Activated naive CD4-positive, alpha-beta T cell treated with anti-CD3 and anti-CD28 coated beads for 36 hours (primary cell): ENCODE measurements at regions of chr13 and their contacts with region 1.

Region 1: GRCh38 chr13:36346222-36347083 is at the start of gene SPART:
- DNase-seq: peak; percentile 93
- H3K4me3 Mint-ChIP-seq: peak within 1 kb of the TSS; percentile 86
- H3K27ac Mint-ChIP-seq: peak within 1 kb of the TSS; percentile 90
- H3K4me1 Mint-ChIP-seq: peaks cover 26% of the 10 kb centered on the region
- H3K27me3 Mint-ChIP-seq: no peaks in the 10 kb centered on the region
- total RNA-seq, gene SPART: 12.5 to 17.0 TPM

Region 2: DNA sequence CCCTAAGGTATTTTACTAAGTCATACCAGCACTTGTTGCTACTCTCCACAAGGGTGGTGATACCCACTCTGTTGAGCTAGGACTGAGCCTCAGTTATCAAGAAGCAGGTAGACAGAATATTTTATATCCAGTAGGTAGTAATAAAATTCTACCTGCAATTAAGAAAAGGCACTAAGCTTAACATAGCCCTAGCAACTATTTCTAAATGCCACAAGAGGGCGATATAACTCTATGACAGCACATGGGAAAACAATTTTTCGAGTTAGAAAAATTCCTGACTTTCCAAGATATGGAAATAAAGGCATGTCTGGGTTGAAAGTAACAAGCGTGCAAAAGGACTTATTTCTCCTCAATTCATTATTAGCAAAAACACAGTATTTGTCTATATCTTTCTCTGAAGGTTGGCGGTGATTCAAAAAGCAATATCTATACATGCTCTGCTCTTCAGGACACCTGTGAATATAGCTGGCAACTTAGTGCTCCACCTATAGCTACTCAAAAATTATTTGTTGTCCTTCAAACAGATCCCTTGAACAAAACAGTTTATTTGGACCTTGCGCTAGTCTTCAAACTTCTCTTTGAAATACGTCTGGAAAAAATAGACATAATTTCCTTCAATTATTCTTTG is 63.5 kb before region 1 on chr13:
- CTCF ChIA-PET with region 1: interaction called, 15 read pairs
- intact Hi-C with region 1: loop called (anchors 2 kb)
- DNase-seq: no peak
- H3K4me3 Mint-ChIP-seq: no peak overlapping the region
- H3K27ac Mint-ChIP-seq: no peak overlapping the region
- H3K4me1 Mint-ChIP-seq: no peaks in the 10 kb centered on the region
- H3K27me3 Mint-ChIP-seq: peaks cover 17% of the 10 kb centered on the region

Region 3: GRCh38 chr13:36357692-36358091 is 11.2 kb after region 1 on chr13:
- CTCF ChIA-PET with region 1: interaction called, 10 read pairs
- intact Hi-C with region 1: no loop called
- DNase-seq: no peak
- H3K4me3 Mint-ChIP-seq: no peak overlapping the region
- H3K27ac Mint-ChIP-seq: no peak overlapping the region
- H3K4me1 Mint-ChIP-seq: no peaks in the 10 kb centered on the region
- H3K27me3 Mint-ChIP-seq: peaks cover 8% of the 10 kb centered on the region

Region 4: DNA sequence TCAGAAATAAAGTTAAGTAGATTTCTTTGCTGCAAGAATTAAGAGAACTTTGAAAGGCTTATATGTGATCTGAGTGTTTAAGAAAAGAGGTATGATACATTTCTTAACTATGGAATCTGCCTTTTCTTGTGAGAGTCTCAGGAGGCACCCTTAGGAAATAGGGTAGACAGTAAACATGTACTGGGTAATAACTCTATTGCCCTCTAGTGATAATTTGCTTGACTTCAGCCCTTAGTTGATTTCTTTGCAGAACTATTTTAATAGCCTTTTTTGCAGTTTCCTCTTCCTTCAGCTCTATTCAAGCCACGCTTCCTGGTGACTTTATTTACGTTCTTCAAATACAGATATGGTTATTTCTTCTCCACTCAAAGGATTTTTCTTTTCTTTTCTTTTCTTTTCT is 48.8 kb after region 1 on chr13:
- CTCF ChIA-PET with region 1: interaction called, 16 read pairs
- intact Hi-C with region 1: loop called (anchors 1 kb)
- DNase-seq: no peak
- H3K4me3 Mint-ChIP-seq: no peak overlapping the region
- H3K27ac Mint-ChIP-seq: no peak overlapping the region
- H3K4me1 Mint-ChIP-seq: no peaks in the 10 kb centered on the region
- H3K27me3 Mint-ChIP-seq: peaks cover 14% of the 10 kb centered on the region

Region 5: DNA sequence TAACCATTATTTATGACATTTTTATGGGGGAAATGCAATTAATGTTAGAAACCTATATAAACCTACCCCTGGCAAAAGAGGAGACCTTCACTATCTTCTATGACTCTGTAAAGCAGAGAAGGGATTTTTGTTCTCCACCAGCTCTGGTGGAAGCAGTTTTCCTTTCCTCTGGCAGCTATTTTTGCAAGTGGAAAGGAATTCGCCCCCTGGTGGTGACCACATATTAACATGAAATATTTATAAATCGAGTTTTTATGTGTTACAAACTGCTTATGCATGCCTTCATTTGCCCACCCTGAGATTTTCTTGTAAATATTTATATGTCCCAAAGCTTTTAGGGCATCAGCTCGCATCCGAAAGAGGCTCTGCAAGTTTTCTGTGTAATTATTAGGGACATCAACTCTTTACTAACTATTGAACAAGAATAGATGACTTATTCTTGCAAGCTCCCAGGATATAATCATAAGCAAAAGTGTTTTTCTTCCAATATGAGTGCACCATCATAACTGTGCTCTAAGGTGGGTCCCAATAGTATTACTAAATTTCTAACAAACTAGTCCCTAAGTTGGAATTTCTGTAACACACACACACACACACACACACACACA is 389.8 kb after region 1 on chr13:
- CTCF ChIA-PET with region 1: interaction called, 17 read pairs
- intact Hi-C with region 1: loop called (anchors 1 kb)
- DNase-seq: peak; percentile 50
- H3K4me3 Mint-ChIP-seq: no peak overlapping the region
- H3K27ac Mint-ChIP-seq: no peak overlapping the region
- H3K4me1 Mint-ChIP-seq: no peaks in the 10 kb centered on the region
- H3K27me3 Mint-ChIP-seq: peaks cover 4% of the 10 kb centered on the region

Region 6: DNA sequence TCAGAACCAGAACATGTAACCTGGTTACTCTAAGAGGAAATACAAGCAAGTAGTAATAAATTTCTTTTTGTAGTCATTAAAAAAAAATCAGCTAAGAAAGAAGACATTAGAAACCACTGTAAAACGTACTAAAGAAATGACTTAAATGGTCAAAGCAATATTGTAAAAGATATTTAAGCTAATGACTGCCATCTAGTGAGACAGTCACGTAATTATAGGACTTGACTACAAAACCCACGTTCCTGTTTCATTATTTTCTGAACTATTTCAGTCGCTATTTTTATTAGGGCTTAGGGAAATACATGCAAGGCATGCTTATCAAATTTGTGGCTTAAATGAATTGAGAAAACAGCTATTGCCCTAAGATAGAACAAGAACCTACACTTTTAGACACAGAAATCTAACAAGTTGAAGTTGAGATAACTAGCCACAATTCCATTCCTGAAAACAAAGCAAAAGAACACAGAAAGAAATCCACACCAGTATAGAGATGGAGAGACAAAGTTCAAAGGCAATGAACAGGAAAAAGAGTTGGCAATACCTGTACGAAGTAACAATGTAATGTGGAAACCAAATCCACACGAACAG is 634.8 kb after region 1 on chr13:
- CTCF ChIA-PET with region 1: no interaction called
- intact Hi-C with region 1: loop called (anchors 5 kb)
- DNase-seq: no peak
- H3K4me3 Mint-ChIP-seq: no peak overlapping the region
- H3K27ac Mint-ChIP-seq: no peak overlapping the region
- H3K4me1 Mint-ChIP-seq: peaks cover 2% of the 10 kb centered on the region
- H3K27me3 Mint-ChIP-seq: no peaks in the 10 kb centered on the region

Region 7: DNA sequence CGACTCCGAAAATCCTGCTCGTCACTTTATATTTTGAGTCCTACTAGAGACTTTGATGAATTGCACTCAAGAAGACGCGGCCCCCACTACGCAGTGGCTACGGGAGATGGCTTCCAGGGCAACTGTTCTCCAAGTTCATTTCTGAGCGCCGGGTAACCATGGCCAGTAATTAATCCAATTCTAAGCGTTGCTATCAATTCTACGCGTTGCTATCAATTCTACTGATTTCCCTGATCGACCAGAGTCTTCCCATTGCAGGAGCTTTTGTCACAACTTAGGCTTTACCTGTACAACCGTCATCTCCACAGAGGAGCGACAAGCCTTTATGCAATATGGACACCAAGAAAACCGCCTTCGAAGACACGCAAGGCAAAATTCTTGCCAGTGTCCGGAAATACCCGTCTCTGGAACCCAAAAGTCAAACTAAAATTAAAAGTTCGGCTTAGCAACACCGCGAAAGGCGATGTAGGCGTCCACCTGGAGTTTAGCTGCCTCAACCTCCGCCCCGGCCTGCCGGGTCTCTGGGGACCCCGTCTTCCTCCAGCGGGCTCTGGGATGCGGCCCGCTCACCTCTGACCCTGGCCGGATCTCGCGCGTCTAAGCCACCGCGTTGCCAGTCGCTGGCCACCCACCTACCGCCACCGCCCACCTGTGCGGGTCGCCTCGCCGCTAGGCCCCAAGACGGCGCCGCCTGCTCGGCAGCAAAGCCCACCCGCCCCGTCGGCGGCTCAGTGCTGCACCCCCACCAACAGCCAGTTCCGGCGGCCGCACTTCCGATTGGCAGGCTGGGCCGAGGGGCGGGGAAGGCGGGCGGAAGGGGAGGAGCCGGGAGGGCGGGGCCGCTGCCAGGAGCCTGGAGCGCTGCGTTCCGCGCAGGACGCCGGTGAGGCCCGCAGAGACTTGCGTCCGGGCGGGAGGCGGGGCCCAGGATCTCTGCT is 712.7 kb after region 1 on chr13 and contains the start of gene SUPT20H:
- CTCF ChIA-PET with region 1: no interaction called
- intact Hi-C with region 1: loop called (anchors 1 kb)
- DNase-seq: peak; percentile 94
- H3K4me3 Mint-ChIP-seq: peak within 1 kb of the TSS; percentile 97
- H3K27ac Mint-ChIP-seq: peak within 1 kb of the TSS; percentile 90
- H3K4me1 Mint-ChIP-seq: peaks cover 33% of the 10 kb centered on the region
- H3K27me3 Mint-ChIP-seq: no peaks in the 10 kb centered on the region
- total RNA-seq, gene SUPT20H: 51.0 to 57.7 TPM